ENCODE measurements at regions of chr16 and their contacts with region 1.

Region 1: DNA sequence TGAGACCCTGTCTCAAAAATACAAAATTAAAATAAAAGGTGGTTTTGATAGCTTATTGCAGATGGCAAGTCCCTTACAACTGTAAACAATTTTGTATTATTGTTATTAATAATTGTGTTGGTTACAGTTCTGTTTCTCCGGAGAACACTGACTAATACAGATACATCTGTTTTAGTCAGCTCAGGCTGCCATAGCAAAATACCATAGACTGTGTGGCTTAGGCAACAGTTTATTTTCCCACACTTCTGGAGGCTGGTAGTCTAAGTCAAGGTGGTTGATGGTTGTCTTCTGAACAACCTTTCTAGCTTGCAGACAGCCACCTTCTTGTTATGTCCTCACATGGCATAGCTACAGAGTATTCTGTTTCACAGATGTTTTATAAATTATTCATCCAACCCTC is 14.2 kb upstream of the IL21R start:
- DNase-seq: peak; percentile 54
- H3K4me3 Mint-ChIP-seq: no peak overlapping the region
- H3K27ac Mint-ChIP-seq: peak overlapping the region; percentile 11
- H3K4me1 Mint-ChIP-seq: peaks cover 14% of the 10 kb centered on the region
- H3K27me3 Mint-ChIP-seq: no peaks in the 10 kb centered on the region

Region 2: GRCh38 chr16:27203429-27204231 is 184.1 kb before region 1 on chr16 and contains the start of gene KDM8:
- CTCF ChIA-PET with region 1: no interaction called
- intact Hi-C with region 1: no loop called
- DNase-seq: peak; percentile 100
- H3K4me3 Mint-ChIP-seq: peak within 1 kb of the TSS; percentile 99
- H3K27ac Mint-ChIP-seq: peak within 1 kb of the TSS; percentile 100
- H3K4me1 Mint-ChIP-seq: peaks cover 50% of the 10 kb centered on the region
- H3K27me3 Mint-ChIP-seq: no peaks in the 10 kb centered on the region
- total RNA-seq, gene KDM8: 11.3 to 13.9 TPM

Region 3: DNA sequence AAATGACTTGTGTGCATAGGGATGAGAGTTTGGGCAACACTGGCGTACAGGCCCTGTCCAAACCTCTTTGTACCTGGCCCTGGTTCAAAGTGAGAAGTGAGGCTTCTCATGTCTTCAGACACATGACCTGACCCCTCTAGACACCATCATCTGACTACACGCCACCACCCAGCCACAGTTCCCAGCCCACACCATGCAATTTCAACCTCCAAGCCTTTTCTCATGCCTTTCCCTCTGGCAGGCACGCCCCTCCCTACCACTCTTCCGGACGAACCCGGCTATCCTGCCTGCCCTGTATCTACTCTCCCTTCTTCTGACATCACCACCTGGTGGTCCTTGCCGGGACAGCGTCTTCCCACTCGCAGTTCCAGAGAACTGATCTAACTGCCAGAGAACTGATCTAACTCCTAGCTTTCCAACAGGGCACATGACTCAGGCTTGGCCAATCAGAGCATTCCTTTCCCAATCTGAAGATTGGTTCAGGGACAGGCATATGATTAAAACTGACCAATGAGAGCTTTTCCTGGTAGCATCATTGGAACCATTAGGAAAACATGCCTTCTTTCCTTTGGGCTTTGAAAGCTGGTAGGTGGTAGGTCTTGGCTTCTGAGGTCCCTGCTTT is 12.8 kb before region 1 on chr16:
- CTCF ChIA-PET with region 1: interaction called, 14 read pairs
- intact Hi-C with region 1: no loop called
- DNase-seq: peak; percentile 81
- H3K4me3 Mint-ChIP-seq: no peak overlapping the region
- H3K27ac Mint-ChIP-seq: no peak overlapping the region
- H3K4me1 Mint-ChIP-seq: peaks cover 47% of the 10 kb centered on the region
- H3K27me3 Mint-ChIP-seq: no peaks in the 10 kb centered on the region